CD8-positive, alpha-beta T cell (primary cell): ENCODE measurements at regions of chr12 and their contacts with region 1.

Region 1: DNA sequence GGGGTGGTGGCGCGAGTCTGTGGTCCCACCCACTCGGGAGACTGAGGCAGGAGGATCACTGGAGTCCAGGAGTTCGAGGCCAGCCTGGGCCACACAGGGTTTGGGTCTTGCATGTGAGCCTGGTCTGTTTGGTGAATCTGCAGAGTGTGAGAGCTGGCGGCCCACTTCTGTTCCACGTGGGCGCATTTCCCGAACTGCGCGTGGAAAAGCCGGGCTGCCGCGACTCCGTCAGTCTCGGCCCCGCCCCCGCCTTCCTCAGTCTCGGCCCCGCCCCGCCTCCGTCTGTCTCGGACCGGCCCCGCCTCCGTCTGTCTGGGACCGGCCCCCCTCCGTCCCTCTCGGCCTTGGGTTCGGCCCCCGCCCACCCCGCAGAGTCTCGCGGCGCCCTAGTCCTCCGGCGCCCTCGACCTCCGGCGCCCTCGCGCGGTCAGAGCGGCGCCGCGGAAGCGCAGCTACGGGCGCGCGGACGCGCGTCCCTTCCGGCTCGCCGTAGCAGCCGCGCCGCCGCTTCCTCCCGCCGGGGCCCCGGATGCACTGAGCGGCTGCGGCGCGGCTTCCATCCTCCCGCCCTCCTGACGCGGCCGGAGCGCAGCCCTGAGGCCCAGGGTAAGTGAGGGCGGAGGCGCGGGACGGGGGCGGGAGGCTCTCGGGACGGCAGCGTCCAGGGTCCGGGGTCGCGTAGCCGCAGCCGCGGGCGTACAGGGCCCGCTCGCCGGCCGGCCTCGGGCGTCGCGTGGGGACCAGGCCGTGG is at the start of gene EP400:
- DNase-seq: peak; percentile 87 to 98 (median 95)
- ATAC-seq: peak; percentile 91
- H3K4me3 ChIP-seq: peak within 1 kb of the TSS; percentile 81 to 84
- H3K4me3 Mint-ChIP-seq: peak within 1 kb of the TSS; percentile 91
- H3K27ac ChIP-seq: peak within 1 kb of the TSS; percentile 59 to 73
- H3K27ac Mint-ChIP-seq: peak within 1 kb of the TSS; percentile 90
- H3K4me1 ChIP-seq: peaks cover 34% of the 10 kb centered on the region
- H3K4me1 Mint-ChIP-seq: peaks cover 42% of the 10 kb centered on the region
- H3K27me3 ChIP-seq: no peaks in the 10 kb centered on the region
- H3K27me3 Mint-ChIP-seq: no peaks in the 10 kb centered on the region
- CTCF ChIP-seq: no peak
- total RNA-seq, gene EP400: 53.1 to 53.9 TPM

Region 2: GRCh38 chr12:130555628-130556485 is 1393.7 kb before region 1 on chr12:
- CTCF ChIA-PET with region 1: no interaction called
- POLR2A ChIA-PET with region 1: no interaction called
- intact Hi-C with region 1: no loop called
- DNase-seq: no peak
- ATAC-seq: no peak
- H3K4me3 ChIP-seq: no peak overlapping the region
- H3K4me3 Mint-ChIP-seq: no peak overlapping the region
- H3K27ac ChIP-seq: no peak overlapping the region
- H3K27ac Mint-ChIP-seq: no peak overlapping the region
- H3K4me1 ChIP-seq: no peaks in the 10 kb centered on the region
- H3K4me1 Mint-ChIP-seq: no peaks in the 10 kb centered on the region
- H3K27me3 ChIP-seq: no peaks in the 10 kb centered on the region
- H3K27me3 Mint-ChIP-seq: peaks cover 12% of the 10 kb centered on the region
- CTCF ChIP-seq: no peak

Region 3: GRCh38 chr12:130871286-130872178 is 1078.1 kb before region 1 on chr12 and contains the start of gene RAN:
- CTCF ChIA-PET with region 1: no interaction called
- POLR2A ChIA-PET with region 1: no interaction called
- intact Hi-C with region 1: loop called in 1 of 2 experiments (anchors 5 kb)
- DNase-seq: peak; percentile 83 to 98 (median 89)
- ATAC-seq: peak; percentile 80
- H3K4me3 ChIP-seq: peak within 1 kb of the TSS; percentile 72 to 82
- H3K4me3 Mint-ChIP-seq: peak within 1 kb of the TSS; percentile 94
- H3K27ac ChIP-seq: peak within 1 kb of the TSS; percentile 84 to 85
- H3K27ac Mint-ChIP-seq: peak within 1 kb of the TSS; percentile 95
- H3K4me1 ChIP-seq: peaks cover 54% of the 10 kb centered on the region
- H3K4me1 Mint-ChIP-seq: peaks cover 65% of the 10 kb centered on the region
- H3K27me3 ChIP-seq: no peaks in the 10 kb centered on the region
- H3K27me3 Mint-ChIP-seq: no peaks in the 10 kb centered on the region
- CTCF ChIP-seq: no peak
- total RNA-seq, gene RAN: 342 to 352 TPM

Region 4: GRCh38 chr12:131755305-131756113 is 194.1 kb before region 1 on chr12:
- CTCF ChIA-PET with region 1: no interaction called
- POLR2A ChIA-PET with region 1: no interaction called
- intact Hi-C with region 1: loop called in 1 of 2 experiments (anchors 10 kb)
- DNase-seq: peak in 4 of 9 experiments; percentile 22 to 63 (median 49)
- ATAC-seq: peak; percentile 83
- H3K4me3 ChIP-seq: no peak overlapping the region
- H3K4me3 Mint-ChIP-seq: no peak overlapping the region
- H3K27ac ChIP-seq: no peak overlapping the region
- H3K27ac Mint-ChIP-seq: peak overlapping the region; percentile 60
- H3K4me1 ChIP-seq: no peaks in the 10 kb centered on the region
- H3K4me1 Mint-ChIP-seq: peaks cover 3% of the 10 kb centered on the region
- H3K27me3 ChIP-seq: no peaks in the 10 kb centered on the region
- H3K27me3 Mint-ChIP-seq: no peaks in the 10 kb centered on the region
- CTCF ChIP-seq: peak; percentile 26

Region 5: DNA sequence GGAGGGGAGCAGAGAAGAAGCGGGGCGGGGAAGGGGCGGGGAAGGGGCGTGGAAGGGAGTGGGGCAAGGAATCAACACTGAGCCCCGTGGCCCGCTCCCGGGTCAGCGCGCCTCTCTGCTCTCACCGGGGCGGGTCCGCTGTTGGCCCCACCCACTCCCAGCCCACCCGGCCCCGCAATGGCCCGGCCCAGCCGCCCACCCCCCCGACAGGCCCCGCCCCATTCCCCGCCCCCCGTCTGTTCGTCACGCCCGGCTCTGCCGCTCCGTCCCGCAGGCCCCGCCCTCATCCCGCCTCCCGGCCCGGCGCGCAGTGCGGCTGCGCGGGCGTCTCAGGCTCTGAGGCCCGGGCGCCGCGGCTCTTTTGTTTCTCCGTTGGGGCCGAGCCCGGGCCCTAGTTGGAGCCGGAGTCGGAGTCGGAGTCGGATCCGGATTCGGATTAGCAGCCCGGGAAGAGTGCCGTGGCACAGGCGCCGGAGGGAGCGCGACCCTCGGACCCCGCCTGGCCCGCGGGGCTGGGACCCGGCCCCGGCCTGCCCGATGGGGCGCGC is 55.2 kb before region 1 on chr12 and contains the start of gene ULK1:
- CTCF ChIA-PET with region 1: interaction called, 3 read pairs
- POLR2A ChIA-PET with region 1: no interaction called
- intact Hi-C with region 1: loop called (anchors 1 kb)
- DNase-seq: peak; percentile 82 to 96 (median 92)
- ATAC-seq: peak; percentile 85
- H3K4me3 ChIP-seq: peak within 1 kb of the TSS; percentile 55 to 77
- H3K4me3 Mint-ChIP-seq: peak within 1 kb of the TSS; percentile 90
- H3K27ac ChIP-seq: peak within 1 kb of the TSS in 1 of 2 experiments; percentile 43
- H3K27ac Mint-ChIP-seq: peak within 1 kb of the TSS; percentile 79
- H3K4me1 ChIP-seq: peaks cover 16% of the 10 kb centered on the region
- H3K4me1 Mint-ChIP-seq: peaks cover 18% of the 10 kb centered on the region
- H3K27me3 ChIP-seq: no peaks in the 10 kb centered on the region
- H3K27me3 Mint-ChIP-seq: no peaks in the 10 kb centered on the region
- CTCF ChIP-seq: no peak
- total RNA-seq, gene ULK1: 76.6 to 79.9 TPM

Region 6: DNA sequence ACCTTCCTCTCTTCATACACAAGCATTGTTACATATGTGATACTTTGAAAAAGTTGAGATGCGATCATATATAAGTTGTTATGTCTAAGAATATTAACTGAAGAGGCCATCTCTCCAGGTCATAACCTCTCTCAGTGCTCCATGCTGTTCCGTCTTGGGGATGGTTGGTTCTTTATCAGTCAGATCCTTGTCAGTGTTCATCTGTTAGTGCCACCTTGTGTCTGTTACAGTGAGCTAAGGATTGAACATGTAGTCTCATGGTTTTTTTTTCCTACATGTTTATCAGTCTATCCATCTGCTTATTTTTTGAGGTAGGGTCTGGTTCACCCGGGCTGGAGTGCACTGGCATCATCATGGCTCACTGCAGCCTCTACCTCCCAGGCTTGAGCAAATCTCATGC is 30.7 kb after region 1 on chr12:
- CTCF ChIA-PET with region 1: no interaction called
- POLR2A ChIA-PET with region 1: no interaction called
- intact Hi-C with region 1: no loop called
- DNase-seq: no peak
- ATAC-seq: no peak
- H3K4me3 ChIP-seq: no peak overlapping the region
- H3K4me3 Mint-ChIP-seq: no peak overlapping the region
- H3K27ac ChIP-seq: no peak overlapping the region
- H3K27ac Mint-ChIP-seq: no peak overlapping the region
- H3K4me1 ChIP-seq: no peaks in the 10 kb centered on the region
- H3K4me1 Mint-ChIP-seq: peaks cover 14% of the 10 kb centered on the region
- H3K27me3 ChIP-seq: no peaks in the 10 kb centered on the region
- H3K27me3 Mint-ChIP-seq: no peaks in the 10 kb centered on the region
- CTCF ChIP-seq: no peak

Region 7: DNA sequence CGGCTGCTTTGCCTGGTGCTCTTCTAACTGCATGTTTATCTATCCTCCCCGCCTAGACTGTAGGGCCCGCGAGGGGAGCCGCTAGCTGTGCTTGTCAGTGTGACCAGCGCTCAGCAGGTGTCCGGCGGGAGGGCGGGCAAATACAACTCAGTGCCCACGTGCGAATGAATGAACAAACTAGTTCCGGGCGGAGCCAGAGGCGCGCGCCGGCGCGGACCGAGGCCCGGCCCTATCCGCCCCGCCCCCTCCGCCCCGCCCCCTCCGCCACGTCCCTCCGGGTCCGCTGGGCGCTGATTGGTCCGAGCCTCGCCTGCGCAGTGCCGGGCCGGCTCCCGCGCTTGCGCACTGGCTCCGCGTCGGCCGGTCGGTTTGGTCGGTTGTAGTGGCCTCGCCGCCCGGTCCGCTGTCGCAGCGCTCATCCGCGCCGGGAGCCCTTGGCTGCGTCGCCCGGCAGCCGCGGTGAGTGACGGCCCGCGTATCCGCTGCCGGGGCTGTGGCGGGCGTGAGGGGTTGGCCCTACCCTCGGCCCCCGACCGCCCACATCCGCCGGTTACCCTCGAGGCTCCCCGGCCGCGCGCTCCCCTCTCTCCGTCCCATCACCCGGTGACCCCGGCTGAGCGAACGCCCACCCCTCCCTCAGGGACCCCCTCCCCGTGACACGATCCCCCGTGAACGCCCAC is 134.5 kb after region 1 on chr12:
- CTCF ChIA-PET with region 1: no interaction called
- POLR2A ChIA-PET with region 1: interaction called, 3 read pairs
- intact Hi-C with region 1: loop called (anchors 1 to 5 kb)
- DNase-seq: peak; percentile 74 to 94 (median 85)
- ATAC-seq: peak; percentile 92
- H3K4me3 ChIP-seq: peak overlapping the region; percentile 62 to 63
- H3K4me3 Mint-ChIP-seq: peak overlapping the region; percentile 85
- H3K27ac ChIP-seq: peak overlapping the region; percentile 70 to 88
- H3K27ac Mint-ChIP-seq: peak overlapping the region; percentile 85
- H3K4me1 ChIP-seq: peaks cover 23% of the 10 kb centered on the region
- H3K4me1 Mint-ChIP-seq: peaks cover 30% of the 10 kb centered on the region
- H3K27me3 ChIP-seq: no peaks in the 10 kb centered on the region
- H3K27me3 Mint-ChIP-seq: no peaks in the 10 kb centered on the region
- CTCF ChIP-seq: no peak

Region 8: DNA sequence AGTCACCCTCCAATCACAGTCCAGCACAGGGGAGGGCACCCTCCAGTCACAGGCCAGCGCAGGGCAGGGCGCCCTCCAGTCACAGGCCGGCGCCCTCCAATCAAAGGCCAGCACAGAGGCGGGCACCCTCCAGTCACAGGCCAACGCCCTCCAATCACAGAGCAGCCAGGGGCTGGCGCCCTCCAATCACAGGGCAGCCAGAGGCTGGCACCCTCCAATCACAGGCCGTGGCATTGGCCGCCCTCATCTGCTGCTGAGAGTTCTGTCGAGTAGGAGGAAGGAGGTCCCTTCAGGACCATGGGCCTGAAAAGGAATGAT is 167.9 kb after region 1 on chr12:
- CTCF ChIA-PET with region 1: no interaction called
- POLR2A ChIA-PET with region 1: no interaction called
- intact Hi-C with region 1: no loop called
- DNase-seq: no peak
- ATAC-seq: no peak
- H3K4me3 ChIP-seq: no peak overlapping the region
- H3K4me3 Mint-ChIP-seq: no peak overlapping the region
- H3K27ac ChIP-seq: no peak overlapping the region
- H3K27ac Mint-ChIP-seq: no peak overlapping the region
- H3K4me1 ChIP-seq: no peaks in the 10 kb centered on the region
- H3K4me1 Mint-ChIP-seq: no peaks in the 10 kb centered on the region
- H3K27me3 ChIP-seq: no peaks in the 10 kb centered on the region
- H3K27me3 Mint-ChIP-seq: no peaks in the 10 kb centered on the region
- CTCF ChIP-seq: no peak

Region 9: DNA sequence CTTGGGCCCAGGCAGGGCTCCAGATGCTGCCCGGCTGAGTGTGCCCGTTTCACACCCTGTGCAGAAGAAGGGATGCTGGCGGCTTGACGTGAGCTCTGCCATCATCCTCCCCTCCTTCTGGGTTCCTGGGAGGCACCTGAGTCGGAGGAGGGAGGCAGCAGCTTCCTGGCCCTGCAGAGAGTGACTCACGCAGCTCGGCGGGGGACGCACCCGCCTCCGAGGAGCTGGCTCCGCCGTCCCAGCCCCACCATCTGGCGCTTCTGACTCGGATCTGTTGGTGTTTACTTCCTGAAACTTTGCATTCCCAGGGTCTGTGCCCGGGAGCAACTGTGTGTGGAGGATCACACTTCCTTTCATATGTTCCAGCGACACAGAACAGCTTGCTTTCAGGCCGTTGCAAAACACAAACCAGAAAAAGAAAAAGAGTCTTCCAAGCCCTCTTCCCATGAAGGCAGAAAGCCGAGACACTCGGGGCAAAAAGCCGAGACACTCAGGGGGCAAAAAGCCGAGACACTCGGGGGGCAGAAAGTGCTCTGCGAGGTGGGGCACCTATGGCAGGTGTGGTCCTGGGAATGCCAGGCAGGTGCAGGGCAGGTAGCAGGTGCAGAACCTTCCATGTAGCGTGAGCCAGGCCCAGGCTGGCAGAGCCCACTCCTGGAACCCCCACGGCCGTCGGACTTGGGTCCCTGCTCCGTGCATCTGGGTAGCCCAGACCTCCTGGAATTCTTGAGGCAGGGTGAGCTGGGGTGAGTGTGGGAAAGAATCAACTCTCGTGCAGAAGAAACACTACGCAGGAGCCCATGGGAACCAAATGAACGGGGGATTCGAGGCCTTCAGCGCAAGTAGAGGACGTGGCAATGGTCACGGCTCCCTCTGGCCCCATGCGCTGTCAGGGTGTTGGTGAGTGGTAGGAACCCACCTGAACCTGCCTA is 407.4 kb after region 1 on chr12:
- CTCF ChIA-PET with region 1: no interaction called
- POLR2A ChIA-PET with region 1: no interaction called
- intact Hi-C with region 1: no loop called
- DNase-seq: no peak
- ATAC-seq: no peak
- H3K4me3 ChIP-seq: no peak overlapping the region
- H3K4me3 Mint-ChIP-seq: no peak overlapping the region
- H3K27ac ChIP-seq: no peak overlapping the region
- H3K27ac Mint-ChIP-seq: no peak overlapping the region
- H3K4me1 ChIP-seq: no peaks in the 10 kb centered on the region
- H3K4me1 Mint-ChIP-seq: no peaks in the 10 kb centered on the region
- H3K27me3 ChIP-seq: no peaks in the 10 kb centered on the region
- H3K27me3 Mint-ChIP-seq: peaks cover 6% of the 10 kb centered on the region
- CTCF ChIP-seq: no peak